Ovary (tissue), 10 donors: ENCODE measurements at regions of chr5 and their contacts with region 1.

Region 1: GRCh38 chr5:15026011-15026893 is 154.7 kb upstream of the ANKH start:
- DNase-seq: no peak
- H3K4me3 ChIP-seq: no peak overlapping the region
- H3K27ac ChIP-seq: no peak overlapping the region
- H3K4me1 ChIP-seq: no peaks in the 10 kb centered on the region
- H3K27me3 ChIP-seq: no peaks in the 10 kb centered on the region
- CTCF ChIP-seq: no peak
- EP300 ChIP-seq: no peak
- POLR2A ChIP-seq: no peak

Region 2: GRCh38 chr5:14900731-14901461 is 125.4 kb before region 1 on chr5:
- intact Hi-C with region 1: loop called in 1 of 4 experiments (anchors 1 kb)
- DNase-seq: no peak
- H3K4me3 ChIP-seq: no peak overlapping the region
- H3K27ac ChIP-seq: no peak overlapping the region
- H3K4me1 ChIP-seq: no peaks in the 10 kb centered on the region
- H3K27me3 ChIP-seq: no peaks in the 10 kb centered on the region
- CTCF ChIP-seq: no peak
- EP300 ChIP-seq: no peak
- POLR2A ChIP-seq: no peak

Region 3: GRCh38 chr5:15037247-15037908 is 11.1 kb after region 1 on chr5:
- intact Hi-C with region 1: no loop called
- DNase-seq: no peak
- H3K4me3 ChIP-seq: no peak overlapping the region
- H3K27ac ChIP-seq: no peak overlapping the region
- H3K4me1 ChIP-seq: no peaks in the 10 kb centered on the region
- H3K27me3 ChIP-seq: no peaks in the 10 kb centered on the region
- CTCF ChIP-seq: no peak
- EP300 ChIP-seq: no peak
- POLR2A ChIP-seq: no peak

Region 4: GRCh38 chr5:15103142-15103541 is 76.9 kb after region 1 on chr5:
- intact Hi-C with region 1: no loop called
- DNase-seq: peak in 1 of 5 donors; percentile 18
- H3K4me3 ChIP-seq: no peak overlapping the region
- H3K27ac ChIP-seq: no peak overlapping the region
- H3K4me1 ChIP-seq: no peaks in the 10 kb centered on the region
- H3K27me3 ChIP-seq: no peaks in the 10 kb centered on the region
- CTCF ChIP-seq: no peak
- EP300 ChIP-seq: no peak
- POLR2A ChIP-seq: no peak